Calu3 (cell line): ENCODE measurements at regions of chr12 and their contacts with region 1.

Region 1: GRCh38 chr12:49866859-49867579 is 24.1 kb upstream of the BCDIN3D start:
- DNase-seq: peak; percentile 77
- H3K4me3 Mint-ChIP-seq: no peak overlapping the region
- H3K27ac Mint-ChIP-seq: no peak overlapping the region
- H3K4me1 Mint-ChIP-seq: peaks cover 10% of the 10 kb centered on the region
- H3K27me3 Mint-ChIP-seq: peaks cover 21% of the 10 kb centered on the region
- CTCF ChIP-seq: peak; percentile 73

Region 2: DNA sequence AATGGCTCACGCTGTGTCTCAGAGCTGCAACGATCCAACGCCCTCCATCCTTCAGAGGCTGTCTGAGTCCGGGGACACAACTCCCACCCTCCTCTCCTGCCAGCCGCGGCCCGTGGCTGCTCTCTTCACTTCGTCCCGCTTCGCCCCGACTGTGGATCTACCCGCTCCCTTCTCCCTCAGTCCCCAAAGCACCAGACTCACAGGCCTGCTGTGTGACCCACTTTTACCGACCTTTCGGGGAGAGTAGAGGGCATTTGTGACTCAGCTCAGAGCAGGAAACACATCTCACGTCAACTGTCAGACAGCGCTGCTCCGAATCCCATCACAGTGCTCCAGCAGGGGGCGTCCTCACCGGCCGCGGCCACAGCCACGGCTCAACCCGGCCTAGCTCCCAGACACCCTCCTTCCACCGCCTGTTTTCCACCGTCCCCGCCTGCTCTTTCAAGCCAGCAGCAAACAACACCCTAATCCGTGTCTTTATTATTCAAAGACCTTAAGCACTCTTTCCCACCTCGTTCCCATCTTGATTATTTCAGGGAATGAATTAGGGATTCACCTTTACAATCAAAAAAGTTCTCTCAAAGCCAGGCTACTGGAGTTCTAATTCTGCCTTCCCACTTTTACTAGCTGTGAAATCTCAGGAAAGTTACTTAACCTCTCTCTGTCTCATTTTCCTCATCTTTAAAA is 78.5 kb after region 1 on chr12:
- CTCF ChIA-PET with region 1: interaction called, 18 read pairs
- intact Hi-C with region 1: loop called (anchors 2 kb)
- DNase-seq: peak; percentile 88
- H3K4me3 Mint-ChIP-seq: peak overlapping the region; percentile 27
- H3K27ac Mint-ChIP-seq: peak overlapping the region; percentile 35
- H3K4me1 Mint-ChIP-seq: peaks cover 32% of the 10 kb centered on the region
- H3K27me3 Mint-ChIP-seq: no peaks in the 10 kb centered on the region
- CTCF ChIP-seq: peak; percentile 74

Region 3: DNA sequence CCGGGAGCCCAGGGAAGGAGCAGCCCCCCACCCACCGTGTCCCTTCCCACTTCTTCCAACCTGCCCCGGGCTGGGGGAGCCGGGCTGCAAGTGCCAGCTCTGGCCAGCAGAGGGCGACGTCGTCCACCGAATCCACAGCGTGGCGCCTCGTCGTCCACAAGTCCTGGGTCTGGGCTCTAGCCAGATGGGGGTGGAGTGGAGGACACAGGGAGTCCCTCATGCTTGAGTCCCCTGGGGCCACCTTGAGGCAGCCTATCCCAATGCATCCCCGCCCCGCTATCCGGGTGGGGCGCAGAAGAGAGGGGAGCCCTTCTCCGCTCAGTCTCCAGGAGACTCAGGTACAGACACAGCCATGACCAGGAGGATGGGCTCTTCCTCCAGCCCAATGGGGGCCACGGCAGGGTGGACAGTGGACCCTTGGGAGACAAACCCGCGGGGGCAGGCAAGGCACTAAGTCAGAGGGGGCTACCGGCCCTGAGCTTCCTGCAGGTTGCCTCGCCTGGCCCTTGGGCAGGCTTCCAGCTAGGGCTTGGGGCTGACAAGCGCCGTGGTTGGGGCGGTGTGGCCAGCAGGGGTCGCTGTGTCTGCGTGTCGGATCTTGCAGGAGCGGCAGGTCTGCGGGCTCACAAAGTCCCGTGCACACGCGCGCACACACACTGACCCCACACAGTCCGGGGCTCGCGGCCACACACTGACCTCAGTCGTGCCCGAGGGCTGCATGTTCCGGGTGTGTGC is 100.2 kb after region 1 on chr12:
- CTCF ChIA-PET with region 1: interaction called, 14 read pairs
- intact Hi-C with region 1: no loop called
- DNase-seq: peak; percentile 86
- H3K4me3 Mint-ChIP-seq: peak overlapping the region; percentile 41
- H3K27ac Mint-ChIP-seq: peak overlapping the region; percentile 68
- H3K4me1 Mint-ChIP-seq: peaks cover 27% of the 10 kb centered on the region
- H3K27me3 Mint-ChIP-seq: no peaks in the 10 kb centered on the region
- CTCF ChIP-seq: peak; percentile 77

Region 4: DNA sequence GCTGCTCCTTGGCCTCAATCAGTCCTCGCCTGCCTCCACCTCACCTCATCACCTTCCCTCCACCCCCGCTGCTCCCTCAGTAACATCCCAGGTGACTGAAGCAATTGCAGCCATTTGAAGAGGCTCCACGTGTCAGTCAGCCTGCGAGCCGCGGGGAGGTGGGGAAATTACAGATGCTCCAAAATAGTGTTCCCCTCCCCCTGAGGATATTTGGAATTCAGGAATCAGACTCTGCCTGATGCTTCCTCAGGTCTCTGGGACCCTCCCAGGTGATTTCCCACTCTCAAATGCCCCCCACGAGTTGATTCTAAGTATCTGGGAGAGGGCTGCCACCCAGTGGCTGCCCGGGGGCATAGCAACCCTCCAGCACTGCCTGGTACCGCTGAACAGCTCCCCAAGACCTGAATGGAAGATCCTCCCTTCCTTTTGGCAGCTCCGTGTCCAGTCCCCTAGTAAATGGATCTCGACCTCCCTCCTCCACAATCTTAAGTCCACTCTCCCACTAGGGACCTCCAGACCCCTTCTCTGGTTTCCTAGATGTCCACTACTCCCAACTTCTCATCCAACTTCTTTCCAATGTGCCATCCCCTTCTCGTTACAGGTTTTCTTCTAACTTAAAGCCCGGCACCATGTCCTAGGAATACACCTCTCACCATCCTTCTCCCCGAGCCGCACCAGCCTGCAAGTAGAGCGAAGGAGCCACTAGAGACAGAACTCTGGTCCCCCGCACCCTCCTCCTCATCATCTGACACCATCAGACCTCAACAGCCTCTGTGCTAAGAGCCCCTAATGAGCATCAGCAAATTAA is 189.0 kb after region 1 on chr12:
- CTCF ChIA-PET with region 1: interaction called, 9 read pairs
- intact Hi-C with region 1: loop called (anchors 10 kb)
- DNase-seq: peak; percentile 49
- H3K4me3 Mint-ChIP-seq: peak overlapping the region; percentile 59
- H3K27ac Mint-ChIP-seq: peak overlapping the region; percentile 63
- H3K4me1 Mint-ChIP-seq: peaks cover 14% of the 10 kb centered on the region
- H3K27me3 Mint-ChIP-seq: peaks cover 47% of the 10 kb centered on the region
- CTCF ChIP-seq: peak; percentile 89